Naive thymus-derived CD4-positive, alpha-beta T cell (primary cell): ENCODE measurements at regions of chr2 and their contacts with region 1.

Region 1: DNA sequence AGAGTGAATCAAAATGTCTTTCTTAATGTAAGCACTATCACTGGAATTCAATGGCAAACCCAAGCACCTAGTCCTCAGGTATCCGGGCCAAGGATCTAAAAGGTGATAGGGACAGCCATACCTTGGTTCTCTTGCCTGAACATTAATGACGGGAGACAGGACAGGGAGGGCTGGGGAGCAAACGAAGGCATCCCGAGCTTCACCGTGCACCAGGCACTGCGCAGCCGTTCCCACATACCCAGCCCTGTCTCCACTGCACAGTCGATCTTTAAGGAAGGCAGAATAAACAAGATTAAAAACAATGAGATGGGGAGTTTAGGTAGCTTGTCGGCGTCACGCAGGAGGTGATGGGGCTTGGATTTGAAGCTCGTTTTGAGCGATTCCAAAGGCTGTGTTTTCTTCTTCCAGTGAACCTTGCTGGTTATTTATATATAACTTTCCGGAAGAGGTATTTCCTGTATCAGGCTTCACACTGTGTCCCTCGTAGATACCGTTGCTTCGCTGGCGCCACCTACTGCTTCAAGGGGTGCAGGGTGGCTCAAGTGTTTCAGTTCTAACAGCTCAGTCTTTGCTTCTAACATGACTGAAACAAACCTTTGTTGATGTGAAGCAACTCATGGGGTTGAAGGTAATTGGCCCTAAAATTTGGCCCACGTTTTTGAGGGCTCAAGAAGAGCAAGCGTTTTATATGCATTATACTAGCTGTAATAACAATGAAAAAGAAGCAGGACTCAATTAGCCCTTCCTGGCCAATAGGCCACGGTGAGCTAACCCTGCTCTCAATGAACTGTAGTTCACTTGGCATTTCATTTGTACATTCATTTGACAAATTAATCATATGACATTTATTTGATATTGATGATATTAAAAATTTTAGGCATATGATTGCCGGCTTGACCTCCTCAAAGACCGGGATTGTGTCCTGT is 77.4 kb downstream of the DCDC2C start:
- DNase-seq: peak in 8 of 9 donors; percentile 17 to 53 (median 44)
- ATAC-seq: peak; percentile 72
- H3K4me3 ChIP-seq: no peak overlapping the region
- H3K4me3 Mint-ChIP-seq: peak overlapping the region; percentile 23 to 84 (median 71)
- H3K27ac ChIP-seq: no peak overlapping the region
- H3K27ac Mint-ChIP-seq: peak overlapping the region in 6 of 9 donors; percentile 2 to 80 (median 47)
- H3K4me1 ChIP-seq: peaks cover 0 to 4% of the 10 kb centered on the region in 2 donors
- H3K4me1 Mint-ChIP-seq: peaks cover 0 to 18% (median 11%) of the 10 kb centered on the region in 7 donors
- H3K27me3 ChIP-seq: no peaks in the 10 kb centered on the region
- H3K27me3 Mint-ChIP-seq: peaks cover 4 to 39% (median 34%) of the 10 kb centered on the region in 5 donors

Region 2: DNA sequence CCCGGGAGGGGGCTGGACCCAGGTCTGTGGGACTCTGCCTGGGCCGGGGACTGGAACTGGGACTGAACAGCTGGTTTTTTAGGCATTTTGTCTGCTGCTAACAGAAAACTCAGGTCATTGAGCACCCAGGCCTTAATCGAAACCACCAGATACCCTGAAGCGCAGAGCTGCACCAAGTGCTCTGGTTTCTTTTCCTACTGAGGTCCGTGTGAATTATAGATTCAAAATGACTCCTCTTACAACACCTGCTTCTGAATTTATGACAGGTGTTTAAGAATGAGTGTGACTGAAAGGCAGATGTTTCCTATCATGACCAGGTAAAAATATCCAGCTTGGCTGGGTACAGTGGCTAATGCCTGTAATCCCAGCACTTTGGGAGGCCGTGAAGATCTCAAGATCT is 353.5 kb before region 1 on chr2:
- CTCF ChIA-PET with region 1: no interaction called
- POLR2A ChIA-PET with region 1: no interaction called
- intact Hi-C with region 1: no loop called
- DNase-seq: no peak
- ATAC-seq: no peak
- H3K4me3 ChIP-seq: no peak overlapping the region
- H3K4me3 Mint-ChIP-seq: no peak overlapping the region
- H3K27ac ChIP-seq: no peak overlapping the region
- H3K27ac Mint-ChIP-seq: no peak overlapping the region
- H3K4me1 ChIP-seq: no peaks in the 10 kb centered on the region
- H3K4me1 Mint-ChIP-seq: peaks cover 0 to 13% (median 5%) of the 10 kb centered on the region in 7 donors
- H3K27me3 ChIP-seq: no peaks in the 10 kb centered on the region
- H3K27me3 Mint-ChIP-seq: no peaks in the 10 kb centered on the region

Region 3: DNA sequence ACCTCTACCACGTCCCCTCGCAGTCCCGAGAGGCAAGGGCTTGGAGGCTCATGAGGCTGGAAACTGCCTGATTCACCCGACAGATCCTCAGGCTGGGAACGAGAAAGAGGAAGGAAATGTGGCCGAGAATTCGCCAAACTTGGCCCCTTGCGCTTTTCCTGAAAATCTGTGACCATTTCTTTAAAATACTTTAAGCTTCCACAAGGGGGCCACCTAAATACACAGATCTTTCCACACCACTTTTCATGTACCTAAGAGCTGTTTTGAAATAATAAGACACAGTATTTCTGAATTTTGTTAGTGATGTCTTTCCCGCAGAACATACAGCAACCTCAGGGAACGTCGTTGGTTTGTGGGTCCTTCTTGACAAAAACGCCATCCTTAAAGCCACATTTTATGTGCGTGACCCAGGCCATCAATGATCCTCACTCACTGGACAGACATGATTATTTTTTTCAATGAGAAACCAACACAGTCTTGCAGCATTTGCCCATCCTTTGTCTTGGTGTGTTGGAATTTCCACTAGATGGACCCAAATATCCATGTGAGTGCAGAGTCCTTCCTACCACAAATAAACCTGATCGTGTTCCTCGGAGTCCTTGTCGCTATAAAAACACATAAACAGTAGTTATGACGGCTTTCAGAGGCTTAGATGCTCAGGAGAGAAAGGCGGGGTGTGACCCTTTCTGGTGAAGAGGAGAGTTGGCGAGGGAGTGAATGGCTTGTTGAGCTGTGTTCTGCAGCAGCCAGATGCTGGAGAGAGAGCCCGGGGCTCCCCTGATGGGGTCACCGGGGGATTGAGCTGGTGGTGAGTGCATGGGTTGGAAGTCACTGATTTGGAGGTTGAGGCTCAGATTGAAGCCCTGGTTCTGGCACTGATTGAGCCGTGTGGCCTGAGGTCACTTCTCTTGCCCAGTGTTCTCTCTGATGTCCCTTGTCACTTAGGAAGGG is 52.4 kb before region 1 on chr2:
- CTCF ChIA-PET with region 1: interaction called, 10 read pairs
- POLR2A ChIA-PET with region 1: no interaction called
- intact Hi-C with region 1: loop called (anchors 1 kb)
- DNase-seq: peak in 3 of 9 donors; percentile 3 to 13 (median 10)
- ATAC-seq: no peak
- H3K4me3 ChIP-seq: no peak overlapping the region
- H3K4me3 Mint-ChIP-seq: no peak overlapping the region
- H3K27ac ChIP-seq: no peak overlapping the region
- H3K27ac Mint-ChIP-seq: no peak overlapping the region
- H3K4me1 ChIP-seq: no peaks in the 10 kb centered on the region
- H3K4me1 Mint-ChIP-seq: peaks cover 0 to 7% (median 0%) of the 10 kb centered on the region in 7 donors
- H3K27me3 ChIP-seq: no peaks in the 10 kb centered on the region
- H3K27me3 Mint-ChIP-seq: peaks cover 0 to 38% (median 17%) of the 10 kb centered on the region in 5 donors

Region 4: GRCh38 chr2:3805201-3805939 is 24.6 kb after region 1 on chr2:
- CTCF ChIA-PET with region 1: no interaction called
- POLR2A ChIA-PET with region 1: no interaction called
- intact Hi-C with region 1: no loop called
- DNase-seq: no peak
- ATAC-seq: no peak
- H3K4me3 ChIP-seq: no peak overlapping the region
- H3K4me3 Mint-ChIP-seq: no peak overlapping the region
- H3K27ac ChIP-seq: no peak overlapping the region
- H3K27ac Mint-ChIP-seq: no peak overlapping the region
- H3K4me1 ChIP-seq: no peaks in the 10 kb centered on the region
- H3K4me1 Mint-ChIP-seq: peaks cover 0 to 2% (median 0%) of the 10 kb centered on the region in 7 donors
- H3K27me3 ChIP-seq: no peaks in the 10 kb centered on the region
- H3K27me3 Mint-ChIP-seq: peaks cover 0 to 47% (median 21%) of the 10 kb centered on the region in 5 donors

Region 5: DNA sequence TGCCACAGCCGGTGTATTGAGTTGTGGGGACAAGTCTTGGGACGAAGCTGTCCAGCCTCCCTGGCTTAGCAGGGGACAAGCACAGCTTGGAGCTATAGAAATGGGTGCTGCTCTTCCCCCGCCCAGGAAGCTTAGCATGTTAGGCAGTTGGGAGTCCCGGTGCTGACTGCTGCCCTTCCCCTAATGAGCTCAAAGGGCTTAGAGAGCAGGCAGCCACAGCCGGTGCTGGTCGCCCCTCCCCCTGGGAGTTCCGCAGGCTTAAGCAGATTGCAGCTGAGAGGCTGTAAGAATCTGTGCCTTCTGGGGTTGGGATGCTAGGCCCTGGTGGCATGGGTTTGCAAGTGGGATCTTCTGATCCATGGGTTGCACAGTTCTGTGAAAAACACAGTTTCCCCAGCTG is 159.9 kb after region 1 on chr2:
- CTCF ChIA-PET with region 1: no interaction called
- POLR2A ChIA-PET with region 1: no interaction called
- intact Hi-C with region 1: no loop called
- DNase-seq: no peak
- ATAC-seq: no peak
- H3K4me3 ChIP-seq: no peak overlapping the region
- H3K4me3 Mint-ChIP-seq: no peak overlapping the region
- H3K27ac ChIP-seq: no peak overlapping the region
- H3K27ac Mint-ChIP-seq: no peak overlapping the region
- H3K4me1 ChIP-seq: no peaks in the 10 kb centered on the region
- H3K4me1 Mint-ChIP-seq: no peaks in the 10 kb centered on the region
- H3K27me3 ChIP-seq: no peaks in the 10 kb centered on the region
- H3K27me3 Mint-ChIP-seq: peaks cover 0 to 23% (median 7%) of the 10 kb centered on the region in 5 donors